HAP-1 (cell line): ENCODE measurements at regions of chr12 and their contacts with region 1.

Region 1: GRCh38 chr12:81627336-81628189 is 131.6 kb downstream of the PPFIA2 start:
- DNase-seq: peak; percentile 33 to 61
- H3K4me3 ChIP-seq: no peak overlapping the region
- H3K4me1 ChIP-seq: no peaks in the 10 kb centered on the region
- H3K27me3 ChIP-seq: no peaks in the 10 kb centered on the region

Region 2: DNA sequence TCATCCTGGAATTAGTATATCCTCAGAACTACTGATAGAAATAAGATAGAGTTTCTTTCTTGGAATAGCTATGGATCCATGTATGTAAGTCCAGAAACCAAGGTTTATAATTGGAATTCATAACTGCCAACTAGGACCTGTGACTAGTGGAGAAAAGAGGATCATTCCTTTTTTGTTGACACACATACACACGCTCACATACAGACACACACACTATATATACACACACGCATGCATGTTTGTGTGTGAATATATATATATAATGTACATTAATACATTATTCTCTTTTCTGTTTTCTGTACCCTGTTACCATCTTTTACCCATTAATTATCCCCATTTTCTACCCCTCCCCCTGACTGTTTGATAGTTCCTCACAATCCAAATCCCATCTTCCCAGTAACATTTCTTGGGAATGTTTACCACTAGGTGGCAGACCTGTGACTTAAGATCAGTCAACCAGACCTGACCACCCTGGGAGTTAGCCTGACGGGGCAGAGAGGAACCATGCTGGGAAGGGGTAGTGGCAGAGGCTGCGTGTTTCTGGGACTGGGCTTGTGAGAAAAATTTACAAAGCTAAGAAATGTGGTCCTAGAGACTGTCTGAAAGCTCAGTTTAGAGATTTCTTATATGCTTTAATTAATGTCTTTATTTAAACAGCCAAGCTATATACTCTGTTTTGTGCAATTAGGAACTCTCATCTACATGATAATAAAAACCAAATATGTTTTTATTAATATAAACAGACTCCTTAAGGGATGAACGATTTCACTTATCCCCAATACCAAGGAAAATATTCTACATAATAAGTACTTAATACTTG is 176.4 kb before region 1 on chr12:
- in situ Hi-C with region 1: loop called (anchors 5 kb)
- DNase-seq: peak; percentile 72 to 76
- H3K4me3 ChIP-seq: no peak overlapping the region
- H3K4me1 ChIP-seq: no peaks in the 10 kb centered on the region
- H3K27me3 ChIP-seq: no peaks in the 10 kb centered on the region

Region 3: DNA sequence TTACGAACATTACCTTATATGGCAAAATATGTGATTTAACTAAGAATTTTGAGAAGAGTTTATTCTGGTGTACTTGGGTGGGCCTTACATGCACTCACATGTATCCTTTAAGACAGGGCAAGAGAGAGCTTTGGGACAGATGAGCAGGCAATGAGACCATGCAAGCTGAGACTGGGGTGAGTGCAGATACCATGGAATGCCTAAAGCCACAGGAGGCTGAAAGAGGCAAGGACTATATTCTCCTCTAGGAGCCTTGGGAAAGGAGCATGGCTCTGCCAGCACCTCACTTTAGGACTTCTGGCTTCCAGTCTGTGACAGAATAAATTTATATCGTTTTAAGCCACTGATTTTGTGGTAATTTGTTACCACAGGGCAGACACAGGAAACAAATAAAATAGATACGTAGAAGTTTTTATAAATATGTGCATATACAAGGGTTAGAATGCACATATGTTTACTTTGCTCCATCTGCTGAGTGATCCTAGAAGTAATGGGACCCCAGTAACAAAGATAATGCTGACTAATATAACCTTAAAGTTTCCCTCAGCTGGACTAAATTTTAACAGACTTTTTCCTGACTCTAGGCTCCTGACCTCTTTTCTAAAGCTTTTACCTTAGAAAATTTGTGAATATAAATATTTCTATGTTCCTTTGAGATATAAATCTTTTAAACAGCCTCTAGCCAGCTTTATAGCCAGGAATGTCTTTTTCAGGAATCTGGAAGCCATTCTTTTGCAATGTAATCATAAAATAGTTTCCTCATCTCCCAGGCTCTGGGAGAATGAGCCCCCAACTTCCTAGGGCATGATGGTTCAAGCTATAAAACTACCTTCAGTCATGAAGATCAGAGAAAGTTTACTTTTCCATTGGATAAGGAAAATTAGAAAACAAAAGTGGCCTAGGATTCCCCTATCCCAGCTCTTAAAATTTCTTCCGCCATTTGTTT is 85.2 kb before region 1 on chr12:
- in situ Hi-C with region 1: no loop called
- DNase-seq: no peak
- H3K4me3 ChIP-seq: no peak overlapping the region
- H3K4me1 ChIP-seq: no peaks in the 10 kb centered on the region
- H3K27me3 ChIP-seq: no peaks in the 10 kb centered on the region

Region 4: GRCh38 chr12:82144505-82144904 is 516.9 kb after region 1 on chr12:
- in situ Hi-C with region 1: no loop called
- DNase-seq: no peak
- H3K4me3 ChIP-seq: no peak overlapping the region
- H3K4me1 ChIP-seq: peaks cover 38% of the 10 kb centered on the region
- H3K27me3 ChIP-seq: no peaks in the 10 kb centered on the region